ENCODE measurements at regions of chr22 and their contacts with region 1.

Region 1: DNA sequence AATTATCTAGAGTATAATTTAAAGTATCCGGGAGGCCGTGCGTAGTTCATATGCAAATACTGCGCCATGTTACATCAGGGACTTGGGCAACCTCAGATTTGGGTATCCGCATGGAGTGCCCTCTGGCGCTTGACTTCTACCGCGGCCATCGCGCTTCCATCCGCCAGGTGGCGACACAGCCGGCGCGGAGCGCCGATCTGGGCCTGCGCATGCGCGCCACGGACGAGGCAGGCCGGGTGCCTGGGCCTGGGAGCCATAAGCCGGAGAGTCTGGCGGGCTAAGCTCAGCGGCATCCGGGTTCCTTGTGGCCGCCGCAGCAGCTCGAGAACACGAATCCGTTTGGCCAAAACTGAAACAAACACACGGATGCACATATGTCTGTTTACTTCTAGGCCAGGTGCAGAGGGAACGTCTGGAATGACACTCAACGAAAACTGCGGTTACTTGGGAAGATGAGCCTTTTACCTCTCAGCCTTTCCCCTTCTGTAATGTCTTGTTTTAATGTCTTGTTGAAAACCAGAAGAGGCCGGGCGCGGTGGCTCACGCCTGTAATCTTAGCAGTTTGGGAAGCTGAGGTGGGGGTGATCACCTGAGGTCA is 21.9 kb downstream of the SNU13 start:
- DNase-seq: peak; percentile 95
- ATAC-seq: peak; percentile 97
- H3K4me3 Mint-ChIP-seq: peak overlapping the region; percentile 73
- H3K27ac Mint-ChIP-seq: peak overlapping the region; percentile 95
- H3K4me1 Mint-ChIP-seq: peaks cover 16% of the 10 kb centered on the region
- H3K27me3 Mint-ChIP-seq: no peaks in the 10 kb centered on the region

Region 2: DNA sequence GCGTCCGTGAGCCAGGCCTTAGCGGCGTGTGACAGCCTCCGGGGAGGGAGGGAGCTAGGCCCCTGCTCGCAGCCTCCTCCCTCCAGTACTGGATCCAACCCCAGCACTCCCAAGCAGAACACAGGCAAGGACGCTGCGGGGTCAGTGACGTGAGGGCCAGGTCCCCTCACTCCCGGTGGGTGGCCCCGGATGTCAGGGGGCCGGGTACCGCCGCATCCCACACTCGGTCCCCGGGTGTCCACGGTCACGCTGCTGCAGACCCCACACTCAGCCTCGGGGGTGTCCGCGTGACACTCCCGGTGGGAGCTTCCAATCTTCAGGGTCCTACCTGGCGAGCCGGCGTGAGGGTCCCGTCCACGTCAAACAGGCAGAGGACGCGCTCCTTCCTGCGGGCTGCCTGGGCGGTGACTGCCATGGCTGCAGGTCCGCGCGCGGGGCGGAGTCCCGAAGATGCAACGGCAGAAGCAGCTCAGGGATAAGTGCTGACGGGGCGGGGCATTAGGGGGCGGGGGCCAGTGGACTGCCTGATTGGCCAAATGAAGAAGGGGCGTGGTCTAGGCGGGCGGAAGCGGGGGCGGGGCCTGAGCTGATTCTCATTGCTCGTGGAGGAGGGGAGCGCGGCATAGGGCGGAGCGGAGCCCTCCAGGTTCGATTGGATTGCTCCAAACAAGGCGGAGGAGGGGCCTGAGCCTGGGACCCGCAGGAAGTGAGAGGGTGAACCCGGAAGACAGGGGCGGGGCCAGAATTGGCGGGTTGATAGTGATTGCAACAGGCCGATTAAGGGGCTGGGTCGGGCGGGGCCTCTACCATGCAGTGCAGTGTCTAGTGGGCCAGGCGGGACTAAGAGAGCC is 77.1 kb before region 1 on chr22 and contains the start of gene PMM1:
- CTCF ChIA-PET with region 1: interaction called, 14 read pairs
- POLR2A ChIA-PET with region 1: interaction called, 3 read pairs
- DNase-seq: peak; percentile 100
- ATAC-seq: peak; percentile 98
- H3K4me3 Mint-ChIP-seq: peak within 1 kb of the TSS; percentile 94
- H3K27ac Mint-ChIP-seq: peak within 1 kb of the TSS; percentile 96
- H3K4me1 Mint-ChIP-seq: peaks cover 20% of the 10 kb centered on the region
- H3K27me3 Mint-ChIP-seq: no peaks in the 10 kb centered on the region
- total RNA-seq, gene PMM1: 37.5 to 38.2 TPM

Region 3: DNA sequence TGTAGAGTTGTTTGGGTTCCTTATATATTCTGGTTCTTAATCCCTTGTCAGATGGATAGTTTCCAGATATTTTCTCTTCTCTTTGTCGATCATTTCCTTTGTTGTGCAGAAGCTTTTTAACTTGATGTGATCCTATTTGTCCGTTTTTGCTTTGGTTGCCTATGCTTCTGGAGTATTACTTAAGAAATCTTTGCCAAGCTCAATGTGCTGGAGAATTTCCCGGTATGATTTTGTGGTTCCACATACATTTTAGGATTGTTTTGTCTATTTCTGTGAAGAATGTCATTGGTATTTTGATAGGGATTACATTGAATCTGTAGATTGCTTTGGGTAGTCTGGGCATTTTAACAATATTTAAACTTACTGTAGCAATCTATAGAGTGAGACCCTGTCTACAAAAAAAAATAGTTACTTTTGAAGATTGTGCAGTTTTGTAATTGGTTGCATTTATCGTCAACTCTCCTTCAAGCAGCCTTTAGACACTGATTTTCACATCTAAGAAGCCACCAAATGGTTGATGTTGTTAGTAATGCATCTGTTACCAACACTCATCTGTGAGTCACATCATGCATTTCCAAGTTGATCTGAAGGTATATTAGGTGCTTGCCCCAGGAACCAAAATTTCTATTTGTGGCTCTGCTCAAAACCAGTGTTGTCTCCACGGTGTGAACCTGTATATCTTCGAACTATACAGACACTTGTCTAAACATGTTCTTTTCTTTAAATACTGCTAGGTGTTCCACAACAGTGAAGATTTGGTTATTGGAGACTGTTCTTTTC is 24.2 kb before region 1 on chr22:
- CTCF ChIA-PET with region 1: interaction called, 12 read pairs
- POLR2A ChIA-PET with region 1: interaction called, 3 read pairs
- DNase-seq: no peak
- ATAC-seq: no peak
- H3K4me3 Mint-ChIP-seq: no peak overlapping the region
- H3K27ac Mint-ChIP-seq: no peak overlapping the region
- H3K4me1 Mint-ChIP-seq: peaks cover under 1% of the 10 kb centered on the region
- H3K27me3 Mint-ChIP-seq: no peaks in the 10 kb centered on the region

Region 4: GRCh38 chr22:41656556-41656955 is 10.2 kb before region 1 on chr22:
- CTCF ChIA-PET with region 1: interaction called, 40 read pairs
- POLR2A ChIA-PET with region 1: interaction called, 11 read pairs
- DNase-seq: no peak
- ATAC-seq: no peak
- H3K4me3 Mint-ChIP-seq: no peak overlapping the region
- H3K27ac Mint-ChIP-seq: no peak overlapping the region
- H3K4me1 Mint-ChIP-seq: peaks cover 8% of the 10 kb centered on the region
- H3K27me3 Mint-ChIP-seq: no peaks in the 10 kb centered on the region

Region 5: GRCh38 chr22:41688365-41689211 is 21.8 kb after region 1 on chr22 and contains the start of gene SNU13:
- CTCF ChIA-PET with region 1: interaction called, 40 read pairs
- POLR2A ChIA-PET with region 1: interaction called, 8 read pairs
- DNase-seq: peak; percentile 96
- ATAC-seq: peak; percentile 94
- H3K4me3 Mint-ChIP-seq: peak within 1 kb of the TSS; percentile 88
- H3K27ac Mint-ChIP-seq: peak within 1 kb of the TSS; percentile 99
- H3K4me1 Mint-ChIP-seq: peaks cover 34% of the 10 kb centered on the region
- H3K27me3 Mint-ChIP-seq: no peaks in the 10 kb centered on the region
- total RNA-seq, gene SNU13: 185 to 200 TPM

Region 6: DNA sequence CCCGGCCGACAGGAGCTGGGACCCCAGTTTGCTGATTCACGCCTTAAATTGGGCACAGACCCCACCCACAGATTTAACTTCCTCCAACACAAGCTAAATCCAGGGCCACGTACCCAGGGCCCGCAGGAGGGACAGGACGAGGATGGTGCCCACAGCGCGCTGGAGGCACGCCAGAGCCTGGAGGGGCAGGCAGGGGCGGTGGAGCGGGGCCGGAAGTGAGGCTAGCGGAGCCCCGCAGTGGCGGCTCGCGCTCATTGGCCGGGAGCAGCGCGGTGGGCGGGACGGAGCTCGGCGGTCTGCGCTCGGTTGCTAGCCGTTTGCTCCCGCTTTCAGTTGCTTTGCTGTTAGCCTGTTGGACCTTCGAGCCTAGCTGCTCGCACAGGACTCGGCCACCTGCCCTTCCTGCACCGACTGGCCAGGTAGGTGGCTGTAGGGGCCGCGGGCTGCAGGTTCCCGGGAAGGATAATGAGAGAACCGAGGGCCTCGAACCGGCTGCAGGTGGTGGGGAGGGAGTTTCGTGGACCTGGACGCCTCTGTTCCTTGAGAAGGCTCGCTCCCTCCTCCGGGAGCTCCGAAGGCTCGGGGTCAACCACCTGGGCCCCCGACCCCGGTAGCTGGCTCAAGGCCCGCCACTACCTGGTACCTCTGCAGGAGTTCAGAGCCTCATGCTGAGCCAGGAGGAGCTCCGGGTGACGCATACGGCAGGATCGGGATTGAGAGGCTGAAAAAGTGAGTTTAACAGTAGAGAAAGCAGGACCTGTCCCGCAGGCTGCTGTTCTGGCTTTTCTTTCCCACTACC is 133.8 kb after region 1 on chr22 and contains the start of gene CCDC134:
- CTCF ChIA-PET with region 1: interaction called, 10 read pairs
- POLR2A ChIA-PET with region 1: interaction called, 14 read pairs
- DNase-seq: peak; percentile 94
- ATAC-seq: peak; percentile 98
- H3K4me3 Mint-ChIP-seq: peak within 1 kb of the TSS; percentile 98
- H3K27ac Mint-ChIP-seq: peak within 1 kb of the TSS; percentile 99
- H3K4me1 Mint-ChIP-seq: peaks cover 43% of the 10 kb centered on the region
- H3K27me3 Mint-ChIP-seq: no peaks in the 10 kb centered on the region
- total RNA-seq, gene CCDC134: 20.3 to 20.9 TPM

Region 7: DNA sequence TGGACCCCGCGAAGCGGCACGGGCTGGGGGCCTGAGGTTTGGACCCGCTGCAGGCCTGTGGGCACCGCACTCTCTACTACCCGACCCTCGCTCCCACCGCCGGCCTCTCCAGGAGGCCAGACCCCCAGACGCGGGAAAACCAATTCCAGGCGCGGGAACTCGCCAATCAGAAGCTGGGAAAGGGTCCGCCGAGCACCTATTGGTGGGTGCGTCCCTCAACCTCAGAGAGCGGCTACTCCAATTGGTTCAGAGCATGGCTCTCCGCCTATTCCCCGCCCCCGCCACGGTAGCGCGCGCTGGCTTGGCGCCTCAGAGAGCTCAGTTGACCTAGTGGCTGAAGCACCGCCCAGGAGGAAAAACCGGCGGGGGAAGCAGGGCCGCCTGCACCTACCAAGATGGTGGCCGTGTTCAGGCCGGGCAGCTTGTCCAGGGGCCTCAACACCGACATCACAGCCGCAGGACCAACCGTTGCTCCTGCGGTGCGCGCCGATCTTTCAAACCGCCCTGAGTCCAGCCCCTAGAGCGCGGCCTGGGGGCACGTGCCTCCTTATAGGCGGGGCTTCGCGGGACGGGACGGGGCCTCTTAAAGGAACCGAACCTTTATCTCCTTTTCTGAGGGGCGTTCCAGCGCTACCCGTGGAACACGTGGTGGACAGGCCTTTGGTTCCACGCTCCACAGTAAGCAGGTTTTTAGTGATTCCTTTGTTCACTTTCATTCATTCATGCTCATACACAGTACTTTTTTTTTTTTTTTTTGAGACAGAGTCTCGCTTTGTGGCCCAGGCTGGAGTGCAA is 280.1 kb after region 1 on chr22 and contains the start of gene CENPM:
- CTCF ChIA-PET with region 1: interaction called, 11 read pairs
- POLR2A ChIA-PET with region 1: interaction called, 3 read pairs
- DNase-seq: peak; percentile 96
- ATAC-seq: peak; percentile 98
- H3K4me3 Mint-ChIP-seq: peak within 1 kb of the TSS; percentile 81
- H3K27ac Mint-ChIP-seq: peak within 1 kb of the TSS; percentile 95
- H3K4me1 Mint-ChIP-seq: peaks cover 41% of the 10 kb centered on the region
- H3K27me3 Mint-ChIP-seq: no peaks in the 10 kb centered on the region
- total RNA-seq, gene CENPM: 83.6 to 83.8 TPM